ENCODE measurements at regions of chr9 and their contacts with region 1.

Region 1: GRCh38 chr9:125218621-125219020 is 18.3 kb downstream of the RABEPK start:
- DNase-seq: no peak
- H3K4me3 ChIP-seq: no peak overlapping the region
- H3K27ac ChIP-seq: no peak overlapping the region
- H3K4me1 ChIP-seq: no peaks in the 10 kb centered on the region
- H3K27me3 ChIP-seq: no peaks in the 10 kb centered on the region
- CTCF ChIP-seq: no peak

Region 2: GRCh38 chr9:125361837-125362531 is 143.4 kb after region 1 on chr9:
- CTCF ChIA-PET with region 1: no interaction called
- POLR2A ChIA-PET with region 1: interaction called, 10 read pairs
- intact Hi-C with region 1: no loop called
- DNase-seq: no peak
- H3K4me3 ChIP-seq: no peak overlapping the region
- H3K27ac ChIP-seq: no peak overlapping the region
- H3K4me1 ChIP-seq: no peaks in the 10 kb centered on the region
- H3K27me3 ChIP-seq: no peaks in the 10 kb centered on the region
- CTCF ChIP-seq: no peak; the same call in 1 of the 2 replicates